ENCODE measurements at regions of chr6 and their contacts with region 1.

Region 1: DNA sequence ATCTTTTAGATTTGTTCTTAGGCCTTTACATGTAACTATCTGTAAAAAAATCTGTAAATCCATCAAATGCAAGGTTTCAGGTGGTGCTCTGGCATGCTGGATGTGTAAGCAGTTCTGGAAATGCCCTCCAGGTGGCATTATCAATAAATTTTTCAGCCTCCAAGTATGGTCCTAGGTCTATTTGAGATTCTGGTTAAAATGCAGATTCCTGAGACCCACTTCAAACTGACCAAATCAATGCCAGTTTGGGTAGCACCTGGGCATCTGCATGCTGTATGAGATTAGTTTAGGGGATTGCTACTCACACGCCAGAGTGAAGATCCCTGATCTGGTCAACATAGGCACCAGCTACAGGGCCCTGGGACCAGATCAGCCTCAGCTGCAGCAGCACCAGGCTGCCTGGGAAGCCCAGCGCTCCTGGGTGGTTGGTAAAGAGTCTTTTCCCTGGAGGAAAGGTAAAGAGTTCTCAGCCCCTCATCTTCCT is 507.3 kb upstream of the CITED2 start:
- DNase-seq: no peak
- ATAC-seq: peak; percentile 68 to 77 (median 72)
- H3K4me3 ChIP-seq: peak overlapping the region in 1 of 12 donors; percentile 4
- H3K27ac ChIP-seq: peak overlapping the region in 11 of 12 donors; percentile 55 to 87 (median 73)
- H3K4me1 ChIP-seq: peaks cover 3 to 36% (median 18%) of the 10 kb centered on the region in 12 donors
- H3K27me3 ChIP-seq: no peaks in the 10 kb centered on the region
- CTCF ChIP-seq: peak; percentile 38 to 67 (median 59)
- POLR2A ChIP-seq: no peak

Region 2: GRCh38 chr6:139722530-139722929 is 159.2 kb before region 1 on chr6:
- intact Hi-C with region 1: no loop called
- DNase-seq: no peak
- ATAC-seq: no peak
- H3K4me3 ChIP-seq: no peak overlapping the region
- H3K27ac ChIP-seq: no peak overlapping the region
- H3K4me1 ChIP-seq: peaks cover 0 to 6% (median 0%) of the 10 kb centered on the region in 12 donors
- H3K27me3 ChIP-seq: no peaks in the 10 kb centered on the region
- CTCF ChIP-seq: no peak
- POLR2A ChIP-seq: no peak

Region 3: DNA sequence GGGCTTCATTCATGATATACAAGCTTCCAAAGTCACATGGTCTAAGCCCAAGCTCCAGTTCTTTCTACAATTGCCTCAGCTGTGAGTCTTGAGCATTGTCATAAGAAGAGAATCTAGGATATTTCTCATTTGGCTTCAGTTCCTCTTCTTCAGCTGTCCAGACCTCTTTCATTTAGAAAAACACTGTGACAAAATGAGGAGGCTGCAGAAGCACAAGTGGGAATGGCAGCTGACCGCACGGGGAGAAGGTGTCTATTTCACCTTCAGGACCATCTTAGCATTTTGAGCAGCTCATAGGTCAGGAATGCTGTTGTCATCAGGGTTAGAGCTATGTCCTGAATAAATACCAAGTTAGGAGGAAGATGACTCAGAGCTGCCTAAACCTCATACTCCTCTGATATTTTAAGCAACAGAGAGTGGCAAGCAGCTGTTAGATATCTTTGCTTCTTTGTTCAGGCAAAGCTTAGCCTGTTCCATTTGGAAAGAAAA is 117.2 kb before region 1 on chr6:
- intact Hi-C with region 1: loop called in 1 of 10 experiments (anchors 10 kb)
- DNase-seq: peak in 4 of 5 donors; percentile 36 to 41 (median 40)
- ATAC-seq: peak; percentile 91 to 99 (median 98)
- H3K4me3 ChIP-seq: no peak overlapping the region
- H3K27ac ChIP-seq: peak overlapping the region; percentile 43 to 89 (median 81)
- H3K4me1 ChIP-seq: peaks cover 0 to 42% (median 22%) of the 10 kb centered on the region in 12 donors
- H3K27me3 ChIP-seq: no peaks in the 10 kb centered on the region
- CTCF ChIP-seq: no peak
- POLR2A ChIP-seq: no peak

Region 4: DNA sequence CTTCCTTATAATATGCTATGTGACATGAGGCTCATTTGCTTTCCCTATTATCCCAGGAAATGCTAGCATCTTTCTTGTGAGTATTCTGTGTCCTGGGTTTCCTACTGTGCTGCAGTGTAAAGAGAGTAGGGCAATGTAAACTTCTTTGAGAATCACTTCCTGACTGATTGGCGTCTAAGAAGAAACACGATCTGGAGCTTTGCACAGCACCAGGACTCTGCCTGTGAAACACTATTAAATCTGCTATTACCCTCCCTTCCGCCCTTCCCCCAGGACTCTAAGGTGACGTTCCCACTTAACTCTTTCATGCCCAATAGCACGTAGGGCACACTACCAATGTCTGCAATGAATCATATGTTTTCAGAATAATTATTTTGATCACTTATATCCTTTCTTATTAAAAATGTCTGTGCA is 100.0 kb after region 1 on chr6:
- intact Hi-C with region 1: loop called in 1 of 10 experiments (anchors 5 kb)
- DNase-seq: peak in 2 of 5 donors; percentile 22 to 26
- ATAC-seq: peak; percentile 38 to 71 (median 60)
- H3K4me3 ChIP-seq: no peak overlapping the region
- H3K27ac ChIP-seq: peak overlapping the region in 11 of 12 donors; percentile 1 to 71 (median 50)
- H3K4me1 ChIP-seq: peaks cover 0 to 61% (median 33%) of the 10 kb centered on the region in 12 donors
- H3K27me3 ChIP-seq: no peaks in the 10 kb centered on the region
- CTCF ChIP-seq: no peak
- POLR2A ChIP-seq: no peak

Region 5: GRCh38 chr6:140043336-140043735 is 161.6 kb after region 1 on chr6:
- intact Hi-C with region 1: loop called in 1 of 10 experiments (anchors 10 kb)
- DNase-seq: no peak
- ATAC-seq: peak in 1 of 4 donors; percentile 73
- H3K4me3 ChIP-seq: no peak overlapping the region
- H3K27ac ChIP-seq: peak overlapping the region in 5 of 12 donors; percentile 25 to 48 (median 32)
- H3K4me1 ChIP-seq: peaks cover 0 to 28% (median 7%) of the 10 kb centered on the region in 12 donors
- H3K27me3 ChIP-seq: no peaks in the 10 kb centered on the region
- CTCF ChIP-seq: no peak
- POLR2A ChIP-seq: no peak

Region 6: GRCh38 chr6:140062043-140063020 is 180.6 kb after region 1 on chr6:
- intact Hi-C with region 1: loop called in 1 of 10 experiments (anchors 10 kb)
- DNase-seq: peak in 4 of 5 donors; percentile 46 to 74 (median 55)
- ATAC-seq: peak in 3 of 4 donors; percentile 53 to 72 (median 59)
- H3K4me3 ChIP-seq: no peak overlapping the region
- H3K27ac ChIP-seq: peak overlapping the region; percentile 8 to 71 (median 58)
- H3K4me1 ChIP-seq: peaks cover 0 to 24% (median 17%) of the 10 kb centered on the region in 12 donors
- H3K27me3 ChIP-seq: no peaks in the 10 kb centered on the region
- CTCF ChIP-seq: no peak
- POLR2A ChIP-seq: no peak

Region 7: DNA sequence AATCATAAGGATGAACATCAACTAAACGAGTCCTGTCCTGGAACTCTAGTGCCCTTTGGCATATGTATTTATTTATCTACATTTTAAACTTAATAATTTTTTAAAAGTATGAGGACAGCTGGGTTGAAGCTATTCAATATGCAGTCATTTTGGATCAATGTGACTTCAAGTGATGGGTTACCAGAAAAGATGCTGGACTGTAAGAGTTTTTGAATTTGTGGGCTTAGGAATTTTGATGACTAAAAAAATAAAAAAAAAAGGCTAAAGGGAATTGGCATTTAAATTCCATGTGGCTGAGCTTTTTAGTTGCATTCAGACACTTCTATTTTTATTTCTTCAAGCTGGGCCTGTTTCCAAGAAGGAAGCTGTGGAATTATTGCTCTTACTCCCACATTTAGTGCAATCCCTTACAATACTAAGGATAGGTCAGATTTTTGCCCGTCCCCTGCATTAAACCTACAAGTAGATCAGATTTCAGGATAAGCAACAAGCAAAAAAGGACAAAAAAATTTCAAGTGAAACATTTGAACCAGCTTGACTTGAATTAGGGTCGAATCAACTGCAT is 196.9 kb after region 1 on chr6:
- intact Hi-C with region 1: loop called in 2 of 10 experiments (anchors 10 kb)
- DNase-seq: peak in 2 of 5 donors; percentile 23 to 43
- ATAC-seq: peak; percentile 15 to 67 (median 56)
- H3K4me3 ChIP-seq: peak overlapping the region in 4 of 12 donors; percentile 5 to 35 (median 21)
- H3K27ac ChIP-seq: peak overlapping the region; percentile 70 to 96 (median 81)
- H3K4me1 ChIP-seq: peaks cover 0 to 32% (median 22%) of the 10 kb centered on the region in 12 donors
- H3K27me3 ChIP-seq: no peaks in the 10 kb centered on the region
- CTCF ChIP-seq: no peak
- POLR2A ChIP-seq: no peak

Region 8: DNA sequence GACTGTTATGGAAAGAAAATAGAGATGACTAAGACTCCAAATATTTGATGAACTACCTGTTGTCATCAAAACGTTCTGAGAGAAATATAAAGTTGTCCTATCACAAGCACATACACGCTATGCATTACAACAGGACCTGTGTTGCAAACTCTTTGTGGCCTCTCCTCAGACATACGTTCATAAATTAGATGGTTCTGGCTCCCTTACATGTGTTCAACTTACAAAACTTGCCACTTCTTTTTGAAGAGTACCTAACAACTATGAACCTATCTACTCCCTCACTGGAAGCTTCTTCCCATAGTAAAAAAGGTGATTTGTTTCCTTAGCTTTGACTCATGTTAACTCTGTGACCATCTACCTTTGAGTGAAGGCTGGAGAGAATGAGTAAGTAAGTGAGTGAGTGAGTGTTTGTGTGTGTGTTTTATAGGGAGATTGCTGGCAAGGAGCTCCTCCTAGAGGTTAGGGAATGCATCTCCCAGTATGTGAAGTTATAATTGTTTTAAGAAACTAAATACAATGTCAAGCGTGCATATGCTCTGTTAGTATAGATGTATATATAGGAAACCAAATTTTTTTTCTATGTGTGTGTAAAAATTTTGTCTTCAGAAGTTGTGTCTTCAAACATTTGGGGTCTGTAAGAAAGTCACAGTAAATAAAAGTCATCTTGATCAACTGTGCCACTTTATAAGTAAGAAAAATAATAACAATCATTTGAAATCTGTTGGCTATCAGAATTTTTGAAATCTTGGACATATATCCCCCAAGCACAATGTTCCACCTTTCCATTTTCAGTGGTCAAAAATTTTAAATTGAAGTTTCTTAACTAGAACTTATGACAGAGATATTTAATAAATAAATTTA is 1039.8 kb after region 1 on chr6:
- intact Hi-C with region 1: loop called in 2 of 10 experiments (anchors 5 to 10 kb)
- DNase-seq: peak in 1 of 5 donors; percentile 21
- ATAC-seq: peak in 3 of 4 donors; percentile 74 to 78 (median 78)
- H3K4me3 ChIP-seq: no peak overlapping the region
- H3K27ac ChIP-seq: no peak overlapping the region
- H3K4me1 ChIP-seq: no peaks in the 10 kb centered on the region
- H3K27me3 ChIP-seq: no peaks in the 10 kb centered on the region
- CTCF ChIP-seq: peak in 11 of 12 donors; percentile 41 to 74 (median 57)
- POLR2A ChIP-seq: no peak

Measured in heart left ventricle (tissue), 16 donors.